Naive thymus-derived CD4-positive, alpha-beta T cell (primary cell): ENCODE measurements at regions of chr18 and their contacts with region 1.

Region 1: GRCh38 chr18:13137670-13138419 is 80.7 kb upstream of the LDLRAD4 start:
- DNase-seq: peak; percentile 26 to 86 (median 77)
- ATAC-seq: peak; percentile 94
- H3K4me3 ChIP-seq: peak overlapping the region; percentile 83
- H3K4me3 Mint-ChIP-seq: peak overlapping the region; percentile 92 to 100 (median 99)
- H3K27ac ChIP-seq: peak overlapping the region; percentile 75
- H3K27ac Mint-ChIP-seq: peak overlapping the region; percentile 93 to 98 (median 97)
- H3K4me1 ChIP-seq: peaks cover 0 to 7% of the 10 kb centered on the region in 2 donors
- H3K4me1 Mint-ChIP-seq: peaks cover 12 to 32% (median 28%) of the 10 kb centered on the region in 7 donors
- H3K27me3 ChIP-seq: no peaks in the 10 kb centered on the region
- H3K27me3 Mint-ChIP-seq: peaks cover 0 to 22% (median 0%) of the 10 kb centered on the region in 5 donors

Region 2: DNA sequence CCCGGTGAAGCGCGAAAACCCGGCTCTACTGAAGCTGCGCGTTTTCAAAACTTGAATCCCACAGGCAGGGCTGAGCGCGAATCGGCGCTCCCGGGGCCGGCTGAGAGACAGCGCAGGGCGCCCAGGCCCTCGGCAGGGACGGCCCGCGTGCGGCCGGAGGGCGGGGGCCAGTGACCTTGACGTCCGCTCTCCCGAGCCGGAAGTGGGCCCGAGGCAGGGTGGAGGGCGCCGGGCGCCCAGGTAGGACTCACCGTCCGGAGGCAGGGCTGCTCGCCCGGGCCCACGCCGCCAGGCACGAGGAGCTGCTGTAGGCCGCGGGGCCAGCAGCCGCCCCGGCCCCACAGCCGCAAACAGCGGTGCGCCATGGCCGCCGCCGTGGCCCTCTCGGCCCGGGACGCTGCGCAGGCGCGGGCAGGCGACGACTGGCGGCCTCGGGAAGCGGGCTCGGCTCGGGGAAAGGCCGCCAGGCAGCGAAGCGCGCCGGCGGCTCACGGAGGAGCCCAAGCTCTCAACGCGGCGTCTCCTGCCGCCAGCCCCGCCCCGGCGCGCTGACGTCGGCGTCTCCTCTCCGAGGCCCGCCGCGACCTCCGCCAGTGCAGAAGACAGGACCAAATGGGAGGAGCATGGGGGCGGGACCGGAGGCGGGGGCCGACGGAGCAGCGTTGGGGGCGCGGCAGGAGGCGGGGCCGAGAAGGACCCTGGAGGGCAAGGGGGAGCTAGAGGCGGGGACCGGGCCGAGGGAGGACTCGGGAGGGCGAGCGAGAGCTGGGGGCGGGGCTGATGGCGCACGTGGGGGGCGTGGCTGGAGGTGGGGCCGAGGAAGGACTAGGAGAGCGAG is 760.9 kb before region 1 on chr18 and contains the start of gene AFG3L2:
- CTCF ChIA-PET with region 1: no interaction called
- POLR2A ChIA-PET with region 1: interaction called, 3 read pairs
- intact Hi-C with region 1: loop called (anchors 1 to 10 kb)
- DNase-seq: peak; percentile 99 to 100 (median 100)
- ATAC-seq: peak; percentile 93
- H3K4me3 ChIP-seq: peak within 1 kb of the TSS; percentile 93
- H3K4me3 Mint-ChIP-seq: peak within 1 kb of the TSS; percentile 85 to 93 (median 92)
- H3K27ac ChIP-seq: peak within 1 kb of the TSS; percentile 97
- H3K27ac Mint-ChIP-seq: peak within 1 kb of the TSS; percentile 77 to 95 (median 90)
- H3K4me1 ChIP-seq: peaks cover 13 to 28% of the 10 kb centered on the region in 2 donors
- H3K4me1 Mint-ChIP-seq: peaks cover 32 to 52% (median 46%) of the 10 kb centered on the region in 7 donors
- H3K27me3 ChIP-seq: no peaks in the 10 kb centered on the region
- H3K27me3 Mint-ChIP-seq: peaks cover 0 to 22% (median 0%) of the 10 kb centered on the region in 5 donors
- total RNA-seq, gene AFG3L2: 26.3 to 42.3 (median 32.0) TPM

Region 3: GRCh38 chr18:12552884-12553242 is 585.0 kb before region 1 on chr18:
- CTCF ChIA-PET with region 1: no interaction called
- POLR2A ChIA-PET with region 1: no interaction called
- intact Hi-C with region 1: no loop called
- DNase-seq: no peak
- ATAC-seq: no peak
- H3K4me3 ChIP-seq: no peak overlapping the region
- H3K4me3 Mint-ChIP-seq: no peak overlapping the region
- H3K27ac ChIP-seq: no peak overlapping the region
- H3K27ac Mint-ChIP-seq: no peak overlapping the region
- H3K4me1 ChIP-seq: no peaks in the 10 kb centered on the region
- H3K4me1 Mint-ChIP-seq: peaks cover 0 to 1% (median 0%) of the 10 kb centered on the region in 7 donors
- H3K27me3 ChIP-seq: no peaks in the 10 kb centered on the region
- H3K27me3 Mint-ChIP-seq: peaks cover 5 to 24% (median 9%) of the 10 kb centered on the region in 5 donors

Region 4: DNA sequence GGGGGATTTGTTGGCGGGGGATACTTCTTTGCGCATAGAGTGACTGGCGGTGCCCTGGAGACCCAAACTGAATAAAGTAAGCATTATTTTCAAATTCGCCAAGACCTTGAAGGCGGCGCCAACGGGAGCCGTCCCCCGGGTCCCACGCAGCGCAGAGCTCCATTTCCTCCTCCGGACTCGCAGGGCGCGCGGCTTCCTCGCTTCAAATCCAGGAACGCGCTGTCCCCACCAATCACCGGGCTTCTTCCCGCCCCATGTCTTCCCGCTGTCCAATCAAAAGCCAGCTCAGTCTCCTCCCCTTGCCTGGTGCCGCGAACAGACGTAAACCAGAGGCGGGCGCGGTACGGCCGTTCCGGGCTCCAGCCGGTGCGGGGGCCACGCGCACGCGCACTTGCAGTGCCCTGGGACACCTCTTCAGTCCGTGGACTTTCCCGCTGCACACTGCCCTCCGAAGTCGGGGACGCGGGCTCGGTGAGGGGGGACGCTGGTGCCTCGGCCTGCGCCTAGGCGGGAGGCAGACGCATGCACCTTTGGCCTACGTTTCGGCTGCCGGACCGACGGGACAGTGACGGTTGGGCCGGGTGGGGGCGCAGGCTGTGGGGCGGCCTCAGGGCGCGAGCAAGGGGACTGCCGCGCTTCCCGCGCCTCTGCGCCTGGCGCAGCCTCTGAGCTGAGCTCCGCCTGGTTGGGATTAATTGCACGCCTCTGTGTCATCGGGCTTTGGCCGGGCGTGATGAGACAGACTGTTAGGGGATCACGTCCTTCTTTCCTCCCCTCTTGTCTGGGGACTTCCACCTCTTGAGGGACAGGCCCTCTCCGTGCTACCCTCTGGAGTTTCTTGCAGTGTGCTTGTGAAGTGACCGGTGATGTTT is 146.6 kb before region 1 on chr18 and contains the start of gene CEP192:
- CTCF ChIA-PET with region 1: no interaction called
- POLR2A ChIA-PET with region 1: interaction called, 7 read pairs
- intact Hi-C with region 1: loop called (anchors 1 kb)
- DNase-seq: peak; percentile 90 to 99 (median 97)
- ATAC-seq: peak; percentile 99
- H3K4me3 ChIP-seq: peak within 1 kb of the TSS; percentile 85
- H3K4me3 Mint-ChIP-seq: peak within 1 kb of the TSS in 9 of 10 donors; percentile 90 to 99 (median 98)
- H3K27ac ChIP-seq: peak within 1 kb of the TSS; percentile 82
- H3K27ac Mint-ChIP-seq: peak within 1 kb of the TSS; percentile 88 to 97 (median 93)
- H3K4me1 ChIP-seq: peaks cover 27 to 29% of the 10 kb centered on the region in 2 donors
- H3K4me1 Mint-ChIP-seq: peaks cover 10 to 29% (median 20%) of the 10 kb centered on the region in 7 donors
- H3K27me3 ChIP-seq: no peaks in the 10 kb centered on the region
- H3K27me3 Mint-ChIP-seq: peaks cover 0 to 1% (median 0%) of the 10 kb centered on the region in 5 donors
- total RNA-seq, gene CEP192: 30.9 to 45.0 (median 39.7) TPM

Region 5: DNA sequence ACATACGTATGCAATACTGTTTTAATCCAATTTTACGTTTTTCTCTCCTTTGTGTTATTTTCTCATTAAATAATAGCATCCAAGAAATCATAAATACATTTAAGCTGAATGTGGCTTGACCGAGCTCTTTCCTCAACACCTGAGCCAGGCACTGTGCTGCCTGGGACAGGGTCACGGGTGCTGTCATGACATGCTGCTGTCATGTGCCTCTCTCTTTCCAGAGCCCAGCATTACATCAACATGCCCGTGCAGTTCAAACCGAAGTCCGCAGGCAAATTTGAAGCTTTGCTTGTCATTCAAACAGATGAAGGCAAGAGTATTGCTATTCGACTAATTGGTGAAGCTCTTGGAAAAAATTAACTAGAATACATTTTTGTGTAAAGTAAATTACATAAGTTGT is 13.4 kb before region 1 on chr18:
- CTCF ChIA-PET with region 1: interaction called, 3 read pairs
- POLR2A ChIA-PET with region 1: interaction called, 12 read pairs
- intact Hi-C with region 1: no loop called
- DNase-seq: no peak
- ATAC-seq: no peak
- H3K4me3 ChIP-seq: no peak overlapping the region
- H3K4me3 Mint-ChIP-seq: no peak overlapping the region
- H3K27ac ChIP-seq: no peak overlapping the region
- H3K27ac Mint-ChIP-seq: no peak overlapping the region
- H3K4me1 ChIP-seq: no peaks in the 10 kb centered on the region
- H3K4me1 Mint-ChIP-seq: peaks cover 0 to 11% (median 0%) of the 10 kb centered on the region in 7 donors
- H3K27me3 ChIP-seq: no peaks in the 10 kb centered on the region
- H3K27me3 Mint-ChIP-seq: no peaks in the 10 kb centered on the region

Region 6: DNA sequence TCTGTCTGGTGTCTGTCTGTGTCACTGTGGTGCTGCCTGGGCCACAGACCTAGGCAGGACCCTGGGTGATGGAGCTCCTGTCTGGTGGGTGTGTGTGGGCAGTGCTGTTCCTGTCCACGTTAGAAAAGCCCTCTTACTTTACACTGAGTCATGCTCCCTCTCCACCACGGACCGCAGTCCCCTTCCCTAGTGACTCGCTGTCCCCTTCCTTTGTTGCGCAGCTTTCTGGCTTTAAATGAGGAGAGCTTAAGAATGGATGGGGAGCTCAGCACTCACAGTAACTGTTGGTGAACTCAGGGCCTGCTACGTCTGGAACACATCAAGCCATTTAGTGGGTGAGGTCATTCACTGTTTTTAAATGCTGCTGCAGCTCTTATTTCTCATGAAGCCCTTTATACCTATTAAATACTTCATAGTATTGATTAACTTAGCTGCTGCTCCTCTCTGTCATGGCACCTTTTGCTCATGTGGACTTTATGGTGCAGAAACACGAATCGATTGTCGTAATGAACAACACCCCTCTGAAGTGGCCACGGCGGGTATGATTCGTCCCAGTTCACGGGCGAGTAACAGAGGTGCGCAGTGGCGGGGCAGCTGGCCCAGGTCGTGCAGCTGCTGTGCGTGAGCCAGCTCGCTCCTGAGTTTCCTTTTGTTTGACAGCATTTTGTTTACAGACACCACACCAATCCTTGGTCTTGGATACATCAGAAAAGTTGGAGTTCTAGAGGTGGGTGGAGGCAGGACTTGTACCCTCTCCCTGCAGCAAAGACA is 181.1 kb after region 1 on chr18:
- CTCF ChIA-PET with region 1: no interaction called
- POLR2A ChIA-PET with region 1: no interaction called
- intact Hi-C with region 1: no loop called
- DNase-seq: no peak
- ATAC-seq: no peak
- H3K4me3 ChIP-seq: no peak overlapping the region
- H3K4me3 Mint-ChIP-seq: no peak overlapping the region
- H3K27ac ChIP-seq: no peak overlapping the region
- H3K27ac Mint-ChIP-seq: peak overlapping the region in 1 of 9 donors; percentile 15
- H3K4me1 ChIP-seq: peaks cover 0 to 3% of the 10 kb centered on the region in 2 donors
- H3K4me1 Mint-ChIP-seq: peaks cover 5 to 13% (median 11%) of the 10 kb centered on the region in 7 donors
- H3K27me3 ChIP-seq: no peaks in the 10 kb centered on the region
- H3K27me3 Mint-ChIP-seq: no peaks in the 10 kb centered on the region

Region 7: GRCh38 chr18:13330996-13331395 is 193.2 kb after region 1 on chr18:
- CTCF ChIA-PET with region 1: no interaction called
- POLR2A ChIA-PET with region 1: no interaction called
- intact Hi-C with region 1: no loop called
- DNase-seq: no peak
- ATAC-seq: no peak
- H3K4me3 ChIP-seq: no peak overlapping the region
- H3K4me3 Mint-ChIP-seq: no peak overlapping the region
- H3K27ac ChIP-seq: no peak overlapping the region
- H3K27ac Mint-ChIP-seq: no peak overlapping the region
- H3K4me1 ChIP-seq: no peaks in the 10 kb centered on the region
- H3K4me1 Mint-ChIP-seq: peaks cover 3 to 32% (median 16%) of the 10 kb centered on the region in 7 donors
- H3K27me3 ChIP-seq: no peaks in the 10 kb centered on the region
- H3K27me3 Mint-ChIP-seq: peaks cover 0 to 7% (median 0%) of the 10 kb centered on the region in 5 donors

Region 8: DNA sequence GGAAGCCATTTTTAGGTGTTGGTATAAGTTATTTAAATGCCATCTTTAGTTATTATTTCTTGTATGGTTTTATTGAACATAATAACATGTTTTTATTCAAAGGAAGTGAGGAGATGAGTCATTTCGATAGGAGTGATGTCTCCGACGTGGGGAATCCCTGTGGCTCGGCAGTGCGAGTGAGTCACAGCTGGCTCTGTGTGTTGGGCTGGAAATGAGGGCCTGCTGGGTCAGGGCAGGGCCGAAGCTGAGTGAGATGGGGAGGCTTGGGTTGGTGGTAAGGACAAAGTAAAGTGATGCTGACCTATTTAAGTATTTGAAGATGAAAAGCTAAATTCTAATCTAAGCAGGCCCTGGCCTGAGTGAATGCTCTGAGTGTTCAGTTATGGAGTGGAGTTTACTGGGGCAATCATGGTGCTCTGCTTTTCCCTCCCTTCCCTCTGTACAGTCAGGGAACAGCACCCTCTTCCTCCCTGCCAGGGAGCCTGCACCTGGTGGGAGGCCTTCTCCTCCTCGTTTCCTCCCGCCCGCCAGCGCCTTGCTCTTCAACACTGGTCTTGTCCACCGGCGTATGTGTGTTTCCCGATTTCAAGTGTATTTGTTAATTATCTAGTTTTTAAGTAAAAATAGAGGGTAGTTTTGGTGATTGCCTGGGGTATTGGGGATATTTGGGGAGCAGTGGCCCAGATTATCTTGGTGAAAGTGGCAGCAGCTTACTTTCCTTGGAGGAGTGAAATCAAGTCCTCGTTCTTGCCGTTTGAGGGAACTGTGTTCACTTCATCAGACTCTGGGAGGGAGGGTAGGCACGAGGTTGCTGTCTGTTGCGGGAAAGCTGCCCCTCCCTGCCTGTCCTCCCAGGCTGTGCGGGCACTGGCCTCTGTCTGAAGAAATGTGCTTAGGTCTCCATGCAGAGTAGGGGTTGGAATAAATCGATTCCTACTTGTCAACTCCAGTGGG is 237.7 kb after region 1 on chr18:
- CTCF ChIA-PET with region 1: no interaction called
- POLR2A ChIA-PET with region 1: no interaction called
- intact Hi-C with region 1: loop called in 1 of 2 experiments (anchors 5 kb)
- DNase-seq: peak in 7 of 9 donors; percentile 29 to 81 (median 54)
- ATAC-seq: peak; percentile 77
- H3K4me3 ChIP-seq: peak overlapping the region; percentile 34
- H3K4me3 Mint-ChIP-seq: peak overlapping the region; percentile 56 to 86 (median 78)
- H3K27ac ChIP-seq: peak overlapping the region; percentile 83
- H3K27ac Mint-ChIP-seq: peak overlapping the region; percentile 92 to 99 (median 96)
- H3K4me1 ChIP-seq: peaks cover 10 to 64% of the 10 kb centered on the region in 2 donors
- H3K4me1 Mint-ChIP-seq: peaks cover 32 to 85% (median 77%) of the 10 kb centered on the region in 7 donors
- H3K27me3 ChIP-seq: no peaks in the 10 kb centered on the region
- H3K27me3 Mint-ChIP-seq: no peaks in the 10 kb centered on the region

Region 9: GRCh38 chr18:14086458-14087231 is 948.8 kb after region 1 on chr18:
- CTCF ChIA-PET with region 1: no interaction called
- POLR2A ChIA-PET with region 1: no interaction called
- intact Hi-C with region 1: loop called in 1 of 2 experiments (anchors 5 kb)
- DNase-seq: no peak
- ATAC-seq: no peak
- H3K4me3 ChIP-seq: no peak overlapping the region
- H3K4me3 Mint-ChIP-seq: no peak overlapping the region
- H3K27ac ChIP-seq: no peak overlapping the region
- H3K27ac Mint-ChIP-seq: no peak overlapping the region
- H3K4me1 ChIP-seq: no peaks in the 10 kb centered on the region
- H3K4me1 Mint-ChIP-seq: no peaks in the 10 kb centered on the region
- H3K27me3 ChIP-seq: no peaks in the 10 kb centered on the region
- H3K27me3 Mint-ChIP-seq: peaks cover 0 to 6% (median 0%) of the 10 kb centered on the region in 5 donors